Gastrocnemius medialis (tissue), 4 donors: ENCODE measurements at regions of chr12 and their contacts with region 1.

Region 1: DNA sequence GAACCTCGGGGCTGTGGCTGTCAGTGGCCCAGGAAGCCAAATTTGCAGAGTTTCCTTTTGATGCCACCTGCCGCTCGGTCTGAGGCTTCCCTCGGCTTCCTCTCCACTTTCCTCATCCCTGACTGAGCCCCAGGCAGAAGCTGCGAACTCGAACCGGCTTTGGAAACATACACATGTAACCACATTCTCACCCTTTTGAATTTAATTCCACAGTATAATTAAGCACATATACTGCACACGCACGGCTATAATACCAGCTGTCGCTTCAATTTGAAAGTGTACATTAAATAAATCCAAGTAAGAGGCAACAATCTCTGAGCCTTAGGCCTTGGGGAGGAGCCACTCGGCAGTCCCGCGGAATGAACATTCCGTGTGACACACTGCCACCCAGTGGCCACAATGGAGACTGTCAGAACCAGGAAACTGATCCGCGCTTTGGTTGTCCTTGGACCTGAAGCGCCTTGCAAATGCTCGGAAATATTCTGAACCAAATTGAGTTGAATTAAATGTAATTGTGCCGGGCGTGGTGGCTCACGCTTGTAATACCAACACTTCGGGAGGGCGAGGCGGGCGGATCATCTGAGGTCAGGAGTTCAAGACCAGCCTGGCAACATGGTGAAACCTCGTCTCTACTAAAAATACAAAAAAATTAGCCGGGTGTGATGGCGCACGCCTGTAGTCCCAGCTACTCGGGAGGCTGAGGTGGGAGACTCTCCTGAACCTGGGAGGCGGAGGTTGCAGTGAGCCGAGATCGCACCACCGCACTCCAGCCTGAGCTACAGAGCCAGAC is 117.9 kb upstream of the TMPO start:
- DNase-seq: peak; percentile 52 to 58
- ATAC-seq: peak; percentile 94 to 98
- H3K4me3 ChIP-seq: peak overlapping the region; percentile 27 to 53 (median 44)
- H3K27ac ChIP-seq: no peak overlapping the region
- H3K4me1 ChIP-seq: no peaks in the 10 kb centered on the region
- H3K27me3 ChIP-seq: no peaks in the 10 kb centered on the region
- CTCF ChIP-seq: peak; percentile 73 to 91 (median 80)
- POLR2A ChIP-seq: no peak

Region 2: GRCh38 chr12:96578526-96579125 is 1818.9 kb before region 1 on chr12:
- in situ Hi-C with region 1: loop called in 2 of 4 experiments (anchors 25 kb)
- intact Hi-C with region 1: loop called (anchors 5 kb)
- DNase-seq: no peak
- ATAC-seq: no peak
- H3K4me3 ChIP-seq: no peak overlapping the region
- H3K27ac ChIP-seq: no peak overlapping the region
- H3K4me1 ChIP-seq: no peaks in the 10 kb centered on the region
- H3K27me3 ChIP-seq: no peaks in the 10 kb centered on the region
- CTCF ChIP-seq: peak in 3 of 5 experiments; percentile 27 to 42 (median 35)
- POLR2A ChIP-seq: no peak